Naive thymus-derived CD4-positive, alpha-beta T cell (primary cell): ENCODE measurements at regions of chr12 and their contacts with region 1.

Region 1: GRCh38 chr12:6927379-6928024 is at the start of gene ATN1:
- DNase-seq: peak in 5 of 9 donors; percentile 41 to 66 (median 43)
- ATAC-seq: peak; percentile 35
- H3K4me3 ChIP-seq: peak within 1 kb of the TSS; percentile 64
- H3K4me3 Mint-ChIP-seq: peak within 1 kb of the TSS; percentile 85 to 99 (median 92)
- H3K27ac ChIP-seq: peak within 1 kb of the TSS; percentile 86
- H3K27ac Mint-ChIP-seq: peak within 1 kb of the TSS; percentile 88 to 98 (median 95)
- H3K4me1 ChIP-seq: peaks cover 16 to 37% of the 10 kb centered on the region in 2 donors
- H3K4me1 Mint-ChIP-seq: peaks cover 38 to 69% (median 56%) of the 10 kb centered on the region in 7 donors
- H3K27me3 ChIP-seq: no peaks in the 10 kb centered on the region
- H3K27me3 Mint-ChIP-seq: no peaks in the 10 kb centered on the region
- total RNA-seq, gene ATN1: 29.5 to 42.2 (median 34.4) TPM

Region 2: GRCh38 chr12:6867413-6868210 is 59.9 kb before region 1 on chr12 and contains the start of gene TPI1:
- CTCF ChIA-PET with region 1: interaction called, 15 read pairs
- POLR2A ChIA-PET with region 1: interaction called, 5 read pairs
- intact Hi-C with region 1: loop called (anchors 1 to 2 kb)
- DNase-seq: peak; percentile 40 to 87 (median 52)
- ATAC-seq: peak; percentile 88
- H3K4me3 ChIP-seq: peak within 1 kb of the TSS; percentile 61
- H3K4me3 Mint-ChIP-seq: peak within 1 kb of the TSS; percentile 87 to 93 (median 91)
- H3K27ac ChIP-seq: peak within 1 kb of the TSS; percentile 82
- H3K27ac Mint-ChIP-seq: peak within 1 kb of the TSS; percentile 76 to 95 (median 87)
- H3K4me1 ChIP-seq: peaks cover 38 to 39% of the 10 kb centered on the region in 2 donors
- H3K4me1 Mint-ChIP-seq: peaks cover 34 to 55% (median 44%) of the 10 kb centered on the region in 7 donors
- H3K27me3 ChIP-seq: no peaks in the 10 kb centered on the region
- H3K27me3 Mint-ChIP-seq: no peaks in the 10 kb centered on the region
- total RNA-seq, gene TPI1: 89.7 to 1,293 (median 134) TPM

Region 3: GRCh38 chr12:6904280-6905278 is 22.9 kb before region 1 on chr12 and contains the start of gene LRRC23:
- CTCF ChIA-PET with region 1: interaction called, 16 read pairs
- POLR2A ChIA-PET with region 1: interaction called, 6 read pairs
- intact Hi-C with region 1: loop called in 1 of 2 experiments (anchors 1 kb)
- DNase-seq: peak; percentile 89 to 98 (median 95)
- ATAC-seq: peak; percentile 98
- H3K4me3 ChIP-seq: peak within 1 kb of the TSS; percentile 75
- H3K4me3 Mint-ChIP-seq: peak within 1 kb of the TSS in 1 of 10 donors; percentile 8
- H3K27ac ChIP-seq: peak within 1 kb of the TSS; percentile 93
- H3K27ac Mint-ChIP-seq: peak within 1 kb of the TSS in 1 of 9 donors; percentile 78
- H3K4me1 ChIP-seq: peaks cover 14 to 17% of the 10 kb centered on the region in 2 donors
- H3K4me1 Mint-ChIP-seq: peaks cover 0 to 10% (median 3%) of the 10 kb centered on the region in 7 donors
- H3K27me3 ChIP-seq: no peaks in the 10 kb centered on the region
- H3K27me3 Mint-ChIP-seq: no peaks in the 10 kb centered on the region
- total RNA-seq, gene LRRC23: 6.6 to 12.1 (median 7.3) TPM

Region 4: GRCh38 chr12:6937481-6938297 is 10.2 kb after region 1 on chr12:
- CTCF ChIA-PET with region 1: interaction called, 47 read pairs
- POLR2A ChIA-PET with region 1: interaction called, 367 read pairs
- intact Hi-C with region 1: loop called (anchors 1 kb)
- DNase-seq: peak; percentile 81 to 96 (median 93)
- ATAC-seq: peak; percentile 97
- H3K4me3 ChIP-seq: peak overlapping the region; percentile 90
- H3K4me3 Mint-ChIP-seq: peak overlapping the region; percentile 75 to 88 (median 84)
- H3K27ac ChIP-seq: peak overlapping the region; percentile 92
- H3K27ac Mint-ChIP-seq: peak overlapping the region; percentile 91 to 99 (median 96)
- H3K4me1 ChIP-seq: peaks cover 5 to 29% of the 10 kb centered on the region in 2 donors
- H3K4me1 Mint-ChIP-seq: peaks cover 41 to 67% (median 51%) of the 10 kb centered on the region in 7 donors
- H3K27me3 ChIP-seq: no peaks in the 10 kb centered on the region
- H3K27me3 Mint-ChIP-seq: no peaks in the 10 kb centered on the region

Region 5: DNA sequence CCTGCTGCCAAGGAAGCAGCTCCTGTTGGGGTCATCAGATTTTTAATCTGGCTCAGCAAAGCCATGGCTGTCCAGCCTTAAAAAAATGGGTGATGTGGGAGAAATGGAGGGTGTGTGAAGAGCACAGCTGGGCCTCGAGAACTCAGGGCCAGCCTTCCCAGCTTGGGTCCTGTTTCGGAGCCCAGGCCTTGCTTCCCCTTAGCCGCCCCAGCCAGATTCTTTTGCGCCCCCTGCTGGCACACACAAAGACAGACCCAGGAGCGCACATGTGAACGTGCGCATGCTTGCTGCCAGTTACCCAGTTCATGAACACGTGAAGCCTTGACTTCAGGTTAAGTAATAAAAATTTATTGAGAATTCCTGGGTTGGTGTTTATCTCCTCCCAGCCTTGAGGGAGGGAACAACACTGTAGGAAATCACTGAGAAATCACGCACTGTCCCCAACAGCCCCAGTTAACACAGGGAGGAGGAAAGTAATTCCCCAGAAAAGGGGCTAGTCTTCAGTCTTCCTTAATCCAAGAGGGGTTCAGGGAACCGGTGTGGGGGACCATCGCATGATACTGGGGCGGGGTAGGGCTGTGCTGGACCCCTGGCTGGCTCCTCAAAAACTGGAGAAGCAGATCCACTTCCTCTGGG is 37.6 kb after region 1 on chr12:
- CTCF ChIA-PET with region 1: interaction called, 34 read pairs
- POLR2A ChIA-PET with region 1: interaction called, 40 read pairs
- intact Hi-C with region 1: loop called (anchors 1 kb)
- DNase-seq: peak; percentile 77 to 89 (median 85)
- ATAC-seq: peak; percentile 69
- H3K4me3 ChIP-seq: no peak overlapping the region
- H3K4me3 Mint-ChIP-seq: peak overlapping the region in 3 of 10 donors; percentile 9 to 23 (median 17)
- H3K27ac ChIP-seq: peak overlapping the region; percentile 68
- H3K27ac Mint-ChIP-seq: peak overlapping the region; percentile 75 to 95 (median 87)
- H3K4me1 ChIP-seq: peaks cover 45 to 60% of the 10 kb centered on the region in 2 donors
- H3K4me1 Mint-ChIP-seq: peaks cover 33 to 59% (median 56%) of the 10 kb centered on the region in 7 donors
- H3K27me3 ChIP-seq: no peaks in the 10 kb centered on the region
- H3K27me3 Mint-ChIP-seq: no peaks in the 10 kb centered on the region

Region 6: GRCh38 chr12:7092229-7092985 is 164.9 kb after region 1 on chr12 and contains the start of gene C1R:
- CTCF ChIA-PET with region 1: interaction called, 14 read pairs
- POLR2A ChIA-PET with region 1: no interaction called
- intact Hi-C with region 1: loop called (anchors 1 kb)
- DNase-seq: peak; percentile 46 to 71 (median 64)
- ATAC-seq: peak; percentile 81
- H3K4me3 ChIP-seq: peak within 1 kb of the TSS; percentile 66
- H3K4me3 Mint-ChIP-seq: peak within 1 kb of the TSS; percentile 76 to 91 (median 86)
- H3K27ac ChIP-seq: peak within 1 kb of the TSS; percentile 44
- H3K27ac Mint-ChIP-seq: peak within 1 kb of the TSS in 8 of 9 donors; percentile 65 to 94 (median 78)
- H3K4me1 ChIP-seq: peaks cover 7 to 8% of the 10 kb centered on the region in 2 donors
- H3K4me1 Mint-ChIP-seq: peaks cover 0 to 14% (median 9%) of the 10 kb centered on the region in 7 donors
- H3K27me3 ChIP-seq: no peaks in the 10 kb centered on the region
- H3K27me3 Mint-ChIP-seq: no peaks in the 10 kb centered on the region
- total RNA-seq, gene C1R: 1.6 to 7.2 (median 4.8) TPM

Region 7: GRCh38 chr12:7142056-7142644 is 214.6 kb after region 1 on chr12:
- CTCF ChIA-PET with region 1: interaction called, 3 read pairs
- POLR2A ChIA-PET with region 1: no interaction called
- intact Hi-C with region 1: loop called in 1 of 2 experiments (anchors 1 kb)
- DNase-seq: peak in 8 of 9 donors; percentile 33 to 60 (median 56)
- ATAC-seq: peak; percentile 83
- H3K4me3 ChIP-seq: no peak overlapping the region
- H3K4me3 Mint-ChIP-seq: no peak overlapping the region
- H3K27ac ChIP-seq: no peak overlapping the region
- H3K27ac Mint-ChIP-seq: no peak overlapping the region
- H3K4me1 ChIP-seq: peaks cover 0 to 3% of the 10 kb centered on the region in 2 donors
- H3K4me1 Mint-ChIP-seq: peaks cover 0 to 19% (median 5%) of the 10 kb centered on the region in 7 donors
- H3K27me3 ChIP-seq: no peaks in the 10 kb centered on the region
- H3K27me3 Mint-ChIP-seq: no peaks in the 10 kb centered on the region